CD14-positive monocyte (primary cell): ENCODE measurements at regions of chr15 and their contacts with region 1.

Region 1: GRCh38 chr15:78618490-78618934 is 2.3 kb downstream of the CHRNA3 start:
- DNase-seq: peak; percentile 54 to 77 (median 70)
- H3K4me3 ChIP-seq: no peak overlapping the region
- H3K4me3 Mint-ChIP-seq: peak overlapping the region in 1 of 2 donors; percentile 82
- H3K27ac ChIP-seq: no peak overlapping the region
- H3K27ac Mint-ChIP-seq: no peak overlapping the region
- H3K4me1 ChIP-seq: no peaks in the 10 kb centered on the region
- H3K4me1 Mint-ChIP-seq: peaks cover 12% of the 10 kb centered on the region
- H3K27me3 ChIP-seq: peaks cover 27 to 41% of the 10 kb centered on the region in 2 donors
- H3K27me3 Mint-ChIP-seq: peaks cover 47 to 50% (median 49%) of the 10 kb centered on the region in 3 donors
- CTCF ChIP-seq: peak; percentile 91

Region 2: DNA sequence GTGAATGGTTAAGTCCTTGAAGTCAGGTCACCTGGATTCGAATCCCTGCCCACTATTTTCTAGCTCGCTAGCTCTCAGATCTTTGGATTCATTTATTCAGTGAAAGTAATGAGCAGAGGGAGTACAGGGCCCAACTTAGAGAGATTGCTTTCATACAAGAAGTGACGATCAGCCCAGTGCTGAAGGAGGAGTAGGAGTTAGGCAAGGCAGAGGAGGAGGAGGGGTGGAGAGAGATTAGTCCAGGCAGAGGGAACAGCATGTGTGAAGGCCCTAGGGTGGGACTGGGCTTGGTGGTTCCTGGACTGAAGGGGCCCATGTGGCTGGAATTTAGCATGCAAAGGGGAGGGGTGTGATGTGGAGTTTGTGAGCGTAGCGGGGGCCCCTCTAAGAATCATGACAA is 57.0 kb before region 1 on chr15:
- intact Hi-C with region 1: no loop called
- DNase-seq: no peak
- H3K4me3 ChIP-seq: no peak overlapping the region
- H3K4me3 Mint-ChIP-seq: peak overlapping the region in 1 of 2 donors; percentile 24
- H3K27ac ChIP-seq: no peak overlapping the region
- H3K27ac Mint-ChIP-seq: no peak overlapping the region
- H3K4me1 ChIP-seq: peaks cover 14 to 19% of the 10 kb centered on the region in 2 donors
- H3K4me1 Mint-ChIP-seq: peaks cover 20% of the 10 kb centered on the region
- H3K27me3 ChIP-seq: peaks cover 18 to 20% of the 10 kb centered on the region in 2 donors
- H3K27me3 Mint-ChIP-seq: peaks cover 17 to 38% (median 24%) of the 10 kb centered on the region in 3 donors
- CTCF ChIP-seq: no peak

Region 3: GRCh38 chr15:78574944-78575343 is 43.6 kb before region 1 on chr15:
- intact Hi-C with region 1: no loop called
- DNase-seq: no peak
- H3K4me3 ChIP-seq: no peak overlapping the region
- H3K4me3 Mint-ChIP-seq: no peak overlapping the region
- H3K27ac ChIP-seq: no peak overlapping the region
- H3K27ac Mint-ChIP-seq: no peak overlapping the region
- H3K4me1 ChIP-seq: no peaks in the 10 kb centered on the region
- H3K4me1 Mint-ChIP-seq: no peaks in the 10 kb centered on the region
- H3K27me3 ChIP-seq: no peaks in the 10 kb centered on the region
- H3K27me3 Mint-ChIP-seq: peaks cover 1 to 3% (median 2%) of the 10 kb centered on the region in 3 donors
- CTCF ChIP-seq: no peak

Region 4: DNA sequence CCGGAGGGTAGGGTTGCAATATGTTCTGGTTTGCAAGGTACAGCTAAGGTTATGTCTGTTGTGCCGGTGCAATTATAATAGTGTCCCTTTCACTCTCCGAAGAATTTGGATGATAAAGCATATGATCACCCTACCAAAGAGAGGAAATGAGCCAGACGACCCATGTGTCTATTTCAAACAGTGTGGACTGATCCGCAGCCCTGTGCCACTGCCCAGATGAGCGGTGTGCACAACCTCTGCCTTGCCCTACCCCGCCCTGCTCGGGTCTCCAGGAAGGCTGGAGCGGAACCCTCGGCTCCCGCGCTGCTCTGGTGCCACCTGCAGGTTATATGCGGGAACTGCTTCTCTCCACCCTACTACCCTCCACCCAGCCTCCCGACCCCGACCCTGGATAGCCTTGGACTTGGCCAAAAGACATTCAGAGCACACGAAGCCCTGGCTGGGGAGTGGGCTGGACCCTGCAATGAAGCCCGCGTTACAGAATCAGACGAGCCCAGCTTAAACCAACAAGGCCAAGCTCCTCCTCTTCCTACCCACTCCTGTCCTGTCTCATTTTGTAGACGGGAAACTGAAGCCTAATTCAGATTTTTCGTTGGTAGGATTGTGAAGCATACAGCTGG is 90.9 kb after region 1 on chr15:
- intact Hi-C with region 1: loop called (anchors 2 kb)
- DNase-seq: peak; percentile 30 to 48 (median 47)
- H3K4me3 ChIP-seq: no peak overlapping the region
- H3K4me3 Mint-ChIP-seq: peak overlapping the region; percentile 2 to 78
- H3K27ac ChIP-seq: no peak overlapping the region
- H3K27ac Mint-ChIP-seq: no peak overlapping the region
- H3K4me1 ChIP-seq: peaks cover 2 to 7% of the 10 kb centered on the region in 2 donors
- H3K4me1 Mint-ChIP-seq: peaks cover 6% of the 10 kb centered on the region
- H3K27me3 ChIP-seq: peaks cover 9 to 17% of the 10 kb centered on the region in 2 donors
- H3K27me3 Mint-ChIP-seq: peaks cover 15 to 45% (median 33%) of the 10 kb centered on the region in 3 donors
- CTCF ChIP-seq: peak; percentile 85

Region 5: DNA sequence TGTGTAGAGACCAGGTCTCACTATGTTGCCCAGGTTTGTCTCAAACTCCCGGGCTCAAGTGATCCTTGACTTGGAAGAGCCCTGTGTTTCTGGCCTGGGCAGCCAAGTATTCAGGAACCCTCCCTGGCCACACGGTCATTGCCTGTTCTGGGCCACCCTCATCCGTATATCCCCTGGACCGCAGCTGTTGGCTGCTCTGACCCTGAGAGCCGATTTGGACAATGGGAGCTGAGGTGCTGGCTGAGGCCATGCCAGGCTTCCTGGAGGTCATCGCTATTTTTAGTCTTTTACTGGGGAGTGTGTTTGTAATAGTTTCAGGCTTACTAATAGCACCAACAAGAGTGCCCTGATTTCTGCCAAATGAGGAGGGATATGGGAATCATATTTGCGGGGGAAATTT is 132.1 kb after region 1 on chr15:
- intact Hi-C with region 1: loop called in 1 of 2 experiments (anchors 2 kb)
- DNase-seq: no peak
- H3K4me3 ChIP-seq: no peak overlapping the region
- H3K4me3 Mint-ChIP-seq: peak overlapping the region; percentile 24 to 80
- H3K27ac ChIP-seq: no peak overlapping the region
- H3K27ac Mint-ChIP-seq: peak overlapping the region in 1 of 7 donors; percentile 13
- H3K4me1 ChIP-seq: peaks cover 4 to 8% of the 10 kb centered on the region in 2 donors
- H3K4me1 Mint-ChIP-seq: peaks cover 5% of the 10 kb centered on the region
- H3K27me3 ChIP-seq: no peaks in the 10 kb centered on the region
- H3K27me3 Mint-ChIP-seq: peaks cover 4 to 7% (median 4%) of the 10 kb centered on the region in 3 donors
- CTCF ChIP-seq: no peak